Astrocyte of the cerebellum (primary cell): ENCODE measurements at regions of chr10 and their contacts with region 1.

Region 1: DNA sequence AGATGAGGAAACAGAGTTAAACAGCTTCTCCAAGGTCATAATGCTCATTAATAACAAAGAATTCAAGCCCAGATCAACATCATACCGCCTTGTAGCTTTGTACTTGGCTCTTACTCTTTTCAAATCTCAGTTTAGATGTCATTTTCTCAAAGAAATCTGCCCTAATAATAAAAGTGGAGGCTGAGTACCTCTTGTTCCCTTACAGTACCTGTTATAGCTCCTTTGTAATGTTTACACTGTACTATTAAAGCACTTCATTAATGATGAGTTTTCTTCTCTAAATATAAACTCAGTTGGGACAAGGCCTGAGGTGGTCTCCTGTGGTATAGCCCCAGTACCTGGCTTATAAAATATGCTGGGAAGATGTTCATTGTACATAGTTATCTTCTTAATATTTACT is 7.8 kb downstream of the SMNDC1 start:
- DNase-seq: no peak
- H3K4me3 ChIP-seq: no peak overlapping the region
- CTCF ChIP-seq: no peak

Region 2: GRCh38 chr10:110221721-110222261 is 75.2 kb before region 1 on chr10:
- in situ Hi-C with region 1: loop called (anchors 5 kb)
- DNase-seq: peak; percentile 76
- H3K4me3 ChIP-seq: peak overlapping the region; percentile 42
- CTCF ChIP-seq: peak; percentile 44